B cell (primary cell): ENCODE measurements at regions of chr12 and their contacts with region 1.

Region 1: DNA sequence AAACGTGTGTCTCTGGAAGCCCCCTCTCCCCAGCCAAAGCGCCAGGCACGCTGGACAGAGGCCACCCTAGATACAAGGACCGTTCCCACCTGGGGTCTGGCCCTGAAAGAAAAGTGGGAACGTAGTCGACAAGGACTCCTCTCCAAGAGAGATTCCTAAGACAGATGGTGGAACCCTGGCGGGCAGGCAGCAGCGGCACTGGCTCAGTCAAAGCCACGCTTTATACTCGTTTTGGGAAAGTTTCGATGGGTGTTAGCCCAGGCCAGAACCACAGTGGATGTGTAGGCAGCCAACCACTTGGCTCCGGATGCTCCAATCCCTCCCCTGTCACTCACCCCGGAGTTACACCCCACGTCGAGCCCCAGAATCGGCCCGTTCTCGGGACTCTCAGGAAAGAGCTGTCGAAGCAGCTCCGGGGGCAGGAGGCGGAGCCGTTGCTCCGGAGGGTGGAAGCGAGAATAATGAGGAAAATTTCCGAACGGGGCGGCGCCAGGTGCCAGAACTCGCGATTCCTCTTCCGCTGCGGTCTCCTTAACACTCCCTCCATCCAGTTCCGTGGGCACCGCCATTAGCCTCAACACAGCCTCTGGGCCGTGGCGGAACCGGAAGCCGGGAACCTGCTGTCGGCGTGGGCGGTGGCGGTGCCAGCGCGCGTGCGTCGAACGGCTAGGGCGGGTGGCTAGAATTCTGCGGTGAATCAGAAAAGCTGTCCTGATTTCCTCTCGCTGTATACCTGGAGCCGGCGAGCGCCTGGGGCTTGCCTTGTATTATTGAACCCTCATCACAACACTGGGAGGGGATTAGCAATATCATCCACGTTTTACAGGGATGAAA is at the start of gene BCDIN3D:
- DNase-seq: peak; percentile 93
- ATAC-seq: peak; percentile 93
- H3K4me3 ChIP-seq: peak within 1 kb of the TSS; percentile 70 to 99 (median 97)
- H3K4me3 Mint-ChIP-seq: peak within 1 kb of the TSS; percentile 94
- H3K27ac ChIP-seq: peak within 1 kb of the TSS; percentile 78 to 80
- H3K27ac Mint-ChIP-seq: peak within 1 kb of the TSS; percentile 96
- H3K4me1 ChIP-seq: peaks cover 12 to 28% of the 10 kb centered on the region in 2 donors
- H3K4me1 Mint-ChIP-seq: peaks cover 29% of the 10 kb centered on the region
- H3K27me3 ChIP-seq: no peaks in the 10 kb centered on the region
- H3K27me3 Mint-ChIP-seq: no peaks in the 10 kb centered on the region
- CTCF ChIP-seq: no peak
- total RNA-seq, gene BCDIN3D: 14.7 and 17.4 TPM in 2 replicates

Region 2: DNA sequence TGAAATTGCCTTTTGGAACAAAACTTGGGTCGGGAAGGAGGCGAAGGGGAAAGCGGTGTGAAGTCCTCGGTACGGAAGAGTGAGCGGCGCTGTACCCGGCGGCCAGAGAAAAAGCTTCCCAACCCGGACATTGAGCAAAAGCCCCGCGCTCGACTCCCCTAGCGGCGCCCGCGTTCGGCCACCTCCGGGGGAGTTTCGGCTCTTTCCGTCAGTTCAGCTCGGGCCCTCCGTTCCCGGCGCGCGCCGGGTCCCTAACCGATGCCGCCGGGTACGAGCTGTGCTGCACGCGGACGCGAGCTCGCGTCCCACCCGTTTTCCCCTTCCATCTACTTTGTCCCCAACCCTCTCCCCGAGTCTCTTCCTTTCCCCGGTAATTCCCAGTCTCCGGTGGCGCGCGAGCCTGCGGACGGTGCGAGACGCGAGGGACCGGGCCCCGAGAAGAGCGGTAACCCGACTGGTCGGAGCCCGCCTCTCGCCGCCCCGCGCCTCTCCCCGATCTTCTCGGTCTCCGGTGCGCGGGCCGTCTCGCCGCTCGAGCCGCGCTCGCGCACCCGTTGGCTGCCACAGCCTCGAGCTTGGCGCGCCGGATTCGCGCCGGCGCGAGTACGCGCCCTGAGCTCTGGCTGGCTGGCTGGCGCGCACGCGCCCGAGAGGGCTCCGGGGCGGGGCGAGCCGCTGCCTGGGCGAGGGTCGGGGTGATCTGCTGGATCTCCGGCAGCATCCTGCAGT is 475.9 kb before region 1 on chr12:
- CTCF ChIA-PET with region 1: no interaction called
- POLR2A ChIA-PET with region 1: no interaction called
- intact Hi-C with region 1: loop called (anchors 2 kb)
- DNase-seq: peak; percentile 90
- ATAC-seq: peak; percentile 78
- H3K4me3 ChIP-seq: peak overlapping the region; percentile 61 to 96 (median 80)
- H3K4me3 Mint-ChIP-seq: peak overlapping the region; percentile 87
- H3K27ac ChIP-seq: peak overlapping the region; percentile 90 to 91
- H3K27ac Mint-ChIP-seq: peak overlapping the region; percentile 98
- H3K4me1 ChIP-seq: peaks cover 33 to 39% of the 10 kb centered on the region in 2 donors
- H3K4me1 Mint-ChIP-seq: peaks cover 46% of the 10 kb centered on the region
- H3K27me3 ChIP-seq: no peaks in the 10 kb centered on the region
- H3K27me3 Mint-ChIP-seq: no peaks in the 10 kb centered on the region
- CTCF ChIP-seq: peak; percentile 44

Region 3: GRCh38 chr12:49763006-49763591 is 79.6 kb before region 1 on chr12:
- CTCF ChIA-PET with region 1: interaction called, 57 read pairs
- POLR2A ChIA-PET with region 1: no interaction called
- intact Hi-C with region 1: loop called (anchors 1 kb)
- DNase-seq: peak; percentile 81
- ATAC-seq: peak; percentile 85
- H3K4me3 ChIP-seq: no peak overlapping the region
- H3K4me3 Mint-ChIP-seq: no peak overlapping the region
- H3K27ac ChIP-seq: peak overlapping the region in 1 of 2 donors; percentile 50
- H3K27ac Mint-ChIP-seq: peak overlapping the region; percentile 26
- H3K4me1 ChIP-seq: peaks cover 12 to 14% of the 10 kb centered on the region in 2 donors
- H3K4me1 Mint-ChIP-seq: peaks cover 22% of the 10 kb centered on the region
- H3K27me3 ChIP-seq: no peaks in the 10 kb centered on the region
- H3K27me3 Mint-ChIP-seq: no peaks in the 10 kb centered on the region
- CTCF ChIP-seq: peak; percentile 89

Region 4: GRCh38 chr12:49828133-49829091 is 14.3 kb before region 1 on chr12 and contains the start of gene NCKAP5L:
- CTCF ChIA-PET with region 1: interaction called, 11 read pairs
- POLR2A ChIA-PET with region 1: interaction called, 16 read pairs
- intact Hi-C with region 1: loop called (anchors 1 kb)
- DNase-seq: peak; percentile 96
- ATAC-seq: peak; percentile 98
- H3K4me3 ChIP-seq: peak within 1 kb of the TSS; percentile 60 to 84 (median 73)
- H3K4me3 Mint-ChIP-seq: peak within 1 kb of the TSS; percentile 99
- H3K27ac ChIP-seq: peak within 1 kb of the TSS; percentile 36 to 75
- H3K27ac Mint-ChIP-seq: peak within 1 kb of the TSS; percentile 97
- H3K4me1 ChIP-seq: peaks cover 26% of the 10 kb centered on the region in 2 donors
- H3K4me1 Mint-ChIP-seq: peaks cover 39% of the 10 kb centered on the region
- H3K27me3 ChIP-seq: no peaks in the 10 kb centered on the region
- H3K27me3 Mint-ChIP-seq: no peaks in the 10 kb centered on the region
- CTCF ChIP-seq: no peak
- total RNA-seq, gene NCKAP5L: 13.2 and 13.4 TPM in 2 replicates

Region 5: DNA sequence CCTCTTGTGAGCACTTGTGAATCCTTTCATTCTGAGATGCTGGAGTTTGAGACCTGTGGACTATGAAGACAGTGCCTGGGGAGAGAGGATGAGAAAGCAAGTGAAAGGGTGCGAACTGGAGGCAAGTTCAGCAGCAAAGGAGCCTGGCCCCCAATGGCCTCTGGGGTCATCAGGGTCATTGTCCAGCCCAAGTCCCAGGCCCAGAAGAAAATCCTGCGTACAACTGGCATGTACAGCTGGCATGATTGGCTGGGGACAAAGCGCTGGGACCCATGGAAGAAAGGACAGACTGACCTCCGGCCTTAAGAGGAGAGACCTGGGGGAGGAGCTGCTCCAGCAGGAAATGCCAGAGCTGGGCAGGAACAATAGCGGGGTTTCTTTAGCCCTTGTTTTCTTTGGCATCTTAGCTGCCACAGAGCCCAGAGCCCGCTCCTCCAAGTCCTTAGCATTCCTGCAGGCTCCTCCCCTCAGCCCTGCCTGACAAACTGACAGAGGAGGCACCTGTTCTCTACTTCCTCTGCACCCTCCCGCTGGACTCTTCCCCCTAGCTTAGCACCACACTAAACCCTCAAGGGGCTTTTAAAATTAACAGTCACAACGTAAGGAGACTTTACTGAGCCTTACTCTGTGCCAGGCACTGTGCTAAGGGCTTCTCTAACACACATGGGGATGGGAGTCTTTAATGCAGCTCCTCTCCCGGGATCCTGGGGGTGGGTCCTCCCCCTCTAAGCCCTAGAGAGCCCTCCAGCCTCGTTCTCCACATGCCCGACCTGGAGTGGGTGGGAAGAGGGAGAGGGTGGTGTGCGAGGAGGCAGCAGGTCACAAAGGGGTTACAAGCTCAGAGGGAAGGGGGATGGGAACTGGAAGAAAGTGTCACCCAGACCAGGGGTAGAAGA is 117.1 kb after region 1 on chr12:
- CTCF ChIA-PET with region 1: no interaction called
- POLR2A ChIA-PET with region 1: no interaction called
- intact Hi-C with region 1: no loop called
- DNase-seq: no peak
- ATAC-seq: no peak
- H3K4me3 ChIP-seq: no peak overlapping the region
- H3K4me3 Mint-ChIP-seq: peak overlapping the region; percentile 56
- H3K27ac ChIP-seq: no peak overlapping the region
- H3K27ac Mint-ChIP-seq: no peak overlapping the region
- H3K4me1 ChIP-seq: peaks cover 11 to 16% of the 10 kb centered on the region in 2 donors
- H3K4me1 Mint-ChIP-seq: peaks cover 9% of the 10 kb centered on the region
- H3K27me3 ChIP-seq: peaks cover 0 to 71% (median 22%) of the 10 kb centered on the region in 4 experiments
- H3K27me3 Mint-ChIP-seq: peaks cover 71% of the 10 kb centered on the region
- CTCF ChIP-seq: no peak

Region 6: DNA sequence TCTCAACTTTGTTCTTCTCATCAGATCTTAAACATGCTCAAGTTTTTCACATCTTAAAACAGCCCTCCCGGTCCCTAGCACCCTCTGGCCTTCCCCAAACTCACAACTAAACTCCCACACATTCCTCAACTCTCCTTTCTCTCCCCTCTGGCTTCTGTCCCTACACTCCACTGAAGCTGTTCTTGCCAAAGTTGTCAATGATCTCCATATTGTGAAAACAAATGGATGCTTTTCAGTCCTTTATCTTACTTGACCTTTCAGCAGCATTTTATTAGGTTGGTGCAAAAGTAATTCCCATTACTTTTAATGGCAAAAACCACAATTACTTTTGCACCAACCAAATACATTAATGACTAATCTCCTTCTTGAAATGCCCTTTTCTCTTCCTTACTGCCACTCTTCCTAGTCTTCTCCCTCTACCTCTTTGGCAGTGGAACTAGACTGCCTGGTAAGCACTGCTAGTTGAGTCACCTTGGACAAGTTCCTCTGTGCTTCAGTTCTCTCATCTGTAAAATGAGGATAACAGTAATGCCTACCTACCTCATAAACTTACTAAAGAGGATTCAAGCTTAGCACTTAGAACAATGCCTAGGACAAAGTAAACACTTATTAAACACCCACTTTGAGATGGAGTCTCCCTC is 308.4 kb after region 1 on chr12:
- CTCF ChIA-PET with region 1: no interaction called
- POLR2A ChIA-PET with region 1: no interaction called
- intact Hi-C with region 1: no loop called
- DNase-seq: no peak
- ATAC-seq: no peak
- H3K4me3 ChIP-seq: no peak overlapping the region
- H3K4me3 Mint-ChIP-seq: no peak overlapping the region
- H3K27ac ChIP-seq: no peak overlapping the region
- H3K27ac Mint-ChIP-seq: peak overlapping the region; percentile 11
- H3K4me1 ChIP-seq: no peaks in the 10 kb centered on the region
- H3K4me1 Mint-ChIP-seq: peaks cover 6% of the 10 kb centered on the region
- H3K27me3 ChIP-seq: no peaks in the 10 kb centered on the region
- H3K27me3 Mint-ChIP-seq: no peaks in the 10 kb centered on the region
- CTCF ChIP-seq: no peak

Region 7: DNA sequence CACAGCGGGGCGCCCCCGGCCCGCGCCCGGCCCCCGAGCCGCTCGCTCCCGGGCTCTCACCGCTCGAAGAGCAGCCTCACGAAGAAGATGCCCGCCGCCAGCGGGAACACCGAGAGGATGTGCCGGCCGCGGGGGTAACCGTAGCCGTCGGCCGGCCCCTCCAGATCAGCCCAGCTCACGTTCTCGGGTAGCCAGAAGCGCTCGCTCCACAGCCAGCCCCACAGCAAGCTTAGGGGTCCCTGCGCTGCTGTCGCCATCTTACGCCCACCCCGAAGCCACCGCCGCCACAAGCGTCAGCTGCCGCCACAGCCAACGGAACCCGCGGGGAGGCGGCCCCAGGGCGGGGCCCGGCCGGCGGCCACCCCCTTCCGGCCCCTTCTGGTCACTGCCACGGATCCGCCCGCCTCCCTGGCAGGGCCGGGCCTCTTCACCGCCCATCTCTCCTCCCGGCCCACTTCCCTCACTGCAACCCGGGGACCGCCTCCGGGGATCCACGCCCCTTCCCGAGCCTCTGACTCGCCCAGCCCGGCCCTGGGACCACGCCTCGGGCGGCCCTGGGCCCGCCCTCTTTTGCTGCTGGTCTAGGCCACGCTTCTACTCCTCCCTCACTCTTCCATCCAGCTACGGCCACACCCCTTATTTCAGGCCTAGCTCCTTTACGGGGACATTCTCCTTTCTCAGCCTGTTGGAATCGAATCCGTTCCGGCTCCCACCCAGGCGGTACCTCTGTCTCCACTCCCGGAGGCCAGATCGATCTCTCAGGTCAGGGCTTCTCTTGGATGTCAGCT is 324.5 kb after region 1 on chr12 and contains the start of gene CERS5:
- CTCF ChIA-PET with region 1: no interaction called
- POLR2A ChIA-PET with region 1: no interaction called
- intact Hi-C with region 1: loop called (anchors 10 kb)
- DNase-seq: peak; percentile 97
- ATAC-seq: peak; percentile 98
- H3K4me3 ChIP-seq: peak within 1 kb of the TSS; percentile 70 to 99 (median 74)
- H3K4me3 Mint-ChIP-seq: peak within 1 kb of the TSS; percentile 95
- H3K27ac ChIP-seq: peak within 1 kb of the TSS; percentile 83 to 90
- H3K27ac Mint-ChIP-seq: peak within 1 kb of the TSS; percentile 95
- H3K4me1 ChIP-seq: peaks cover 17 to 19% of the 10 kb centered on the region in 2 donors
- H3K4me1 Mint-ChIP-seq: peaks cover 25% of the 10 kb centered on the region
- H3K27me3 ChIP-seq: no peaks in the 10 kb centered on the region
- H3K27me3 Mint-ChIP-seq: no peaks in the 10 kb centered on the region
- CTCF ChIP-seq: no peak
- total RNA-seq, gene CERS5: 70.9 and 72.0 TPM in 2 replicates